Activated naive CD4-positive, alpha-beta T cell treated with anti-CD3 and anti-CD28 coated beads for 36 hours (primary cell): ENCODE measurements at regions of chr14 and their contacts with region 1.

Region 1: DNA sequence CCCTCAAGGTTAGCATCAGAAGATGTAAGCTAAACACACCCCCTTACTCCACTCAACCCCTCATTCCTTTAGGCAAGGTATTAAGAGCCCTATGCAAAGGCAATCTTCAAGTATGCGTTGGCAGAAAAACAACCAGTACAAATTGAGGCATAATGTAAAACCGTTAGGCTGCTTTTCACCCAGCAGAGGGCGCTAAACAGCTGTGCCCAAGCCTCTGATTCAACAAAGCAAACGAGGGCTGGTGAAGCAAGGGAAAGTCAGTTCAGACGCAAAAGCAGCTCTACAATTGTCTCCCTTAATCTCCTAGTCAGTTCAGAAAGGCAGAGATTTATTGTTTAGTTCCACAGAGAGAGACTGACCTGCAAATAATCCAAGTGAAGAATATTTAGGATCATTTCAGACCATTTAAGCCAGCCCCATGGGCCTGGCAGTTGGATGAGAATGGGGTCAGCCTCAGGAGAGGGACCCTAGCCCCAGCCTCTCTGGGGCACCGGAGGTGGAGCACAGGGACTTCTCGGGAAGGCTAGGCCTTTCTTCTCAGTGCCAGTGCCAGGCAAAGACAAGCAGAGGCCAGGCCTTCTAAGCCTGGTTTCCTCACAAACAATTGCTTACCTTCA is 23.5 kb downstream of the DCAF5 start:
- DNase-seq: peak; percentile 89
- H3K4me3 Mint-ChIP-seq: no peak overlapping the region
- H3K27ac Mint-ChIP-seq: peak overlapping the region; percentile 26
- H3K4me1 Mint-ChIP-seq: peaks cover 67% of the 10 kb centered on the region
- H3K27me3 Mint-ChIP-seq: no peaks in the 10 kb centered on the region

Region 2: DNA sequence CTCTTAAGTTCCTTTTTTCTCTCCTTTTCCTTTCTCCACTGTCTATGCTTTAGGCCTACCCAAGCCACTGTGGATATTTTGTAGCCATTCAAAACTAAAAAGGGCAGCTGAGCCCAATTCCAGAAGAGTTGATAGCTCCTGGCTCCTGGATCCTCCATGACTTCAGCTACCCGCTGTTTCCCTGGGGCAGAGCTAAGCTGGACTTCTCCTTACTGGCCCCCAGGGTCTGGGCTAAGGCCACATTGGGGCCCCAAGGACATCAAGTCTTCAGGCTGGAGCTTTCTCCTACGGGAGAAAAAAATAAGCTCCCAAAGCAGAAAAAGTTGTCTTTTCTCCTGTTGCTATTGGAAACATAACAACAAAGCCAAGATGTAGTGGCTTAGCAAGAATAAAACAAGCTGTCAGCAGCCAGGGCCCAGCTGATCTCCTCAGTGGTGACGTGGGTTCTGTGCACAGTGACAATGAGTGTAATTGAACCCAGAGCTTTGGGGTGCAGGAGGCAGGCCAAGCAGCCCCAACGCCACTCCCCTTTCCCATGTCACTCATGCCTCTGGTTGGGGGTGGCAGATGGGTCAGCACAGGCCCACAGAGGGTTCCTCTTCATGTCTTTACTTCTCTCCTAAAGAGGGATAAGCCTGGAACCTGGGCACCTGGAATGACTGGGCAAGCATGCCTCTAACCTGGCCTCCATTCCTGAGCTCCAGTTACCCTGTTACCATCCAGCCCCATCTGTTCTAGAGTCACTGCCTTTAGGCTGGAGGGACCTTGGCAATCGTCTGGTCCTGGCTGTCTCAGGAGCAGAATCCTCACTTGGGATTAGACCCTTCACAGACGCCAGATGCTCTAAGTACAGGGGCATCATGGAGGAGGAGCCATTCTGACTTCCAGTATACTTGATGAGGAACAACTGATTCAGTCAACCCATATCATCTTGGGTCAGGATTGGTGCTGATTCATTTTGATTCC is 507.7 kb before region 1 on chr14:
- CTCF ChIA-PET with region 1: no interaction called
- intact Hi-C with region 1: no loop called
- DNase-seq: no peak
- H3K4me3 Mint-ChIP-seq: no peak overlapping the region
- H3K27ac Mint-ChIP-seq: no peak overlapping the region
- H3K4me1 Mint-ChIP-seq: no peaks in the 10 kb centered on the region
- H3K27me3 Mint-ChIP-seq: no peaks in the 10 kb centered on the region

Region 3: DNA sequence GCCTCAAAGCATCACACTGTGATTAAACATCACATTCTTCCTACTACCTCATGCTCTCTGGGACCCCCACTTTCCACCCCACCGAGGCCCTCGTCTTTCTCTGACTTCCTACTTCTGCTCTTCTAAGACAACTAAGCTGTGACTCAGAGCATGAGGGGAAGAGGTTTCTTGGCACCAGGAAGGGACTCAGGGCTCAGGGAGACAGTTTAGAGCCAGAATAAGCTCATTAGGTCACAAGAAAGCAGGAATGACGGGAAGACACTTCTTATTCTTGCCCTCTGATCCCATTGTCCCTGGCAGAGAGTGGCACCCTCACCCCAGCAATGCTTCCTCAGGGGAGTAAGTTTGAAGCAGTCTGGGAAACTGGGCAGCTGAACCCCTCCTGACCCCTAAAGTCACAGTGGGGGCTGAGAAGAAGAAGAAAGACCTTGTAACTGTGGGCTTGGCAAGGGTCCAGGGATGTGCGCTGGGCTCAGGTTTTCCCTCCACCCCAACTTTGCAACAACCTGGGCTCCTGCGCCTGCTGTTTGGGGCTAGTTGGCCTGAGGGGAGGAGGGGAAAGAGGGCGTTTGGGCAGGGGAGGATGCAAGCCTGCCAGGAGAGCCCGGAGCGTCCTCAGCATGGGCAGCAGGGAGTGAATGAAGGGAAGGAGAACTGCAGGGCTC is 85.6 kb before region 1 on chr14:
- CTCF ChIA-PET with region 1: no interaction called
- intact Hi-C with region 1: no loop called
- DNase-seq: no peak
- H3K4me3 Mint-ChIP-seq: no peak overlapping the region
- H3K27ac Mint-ChIP-seq: no peak overlapping the region
- H3K4me1 Mint-ChIP-seq: peaks cover 8% of the 10 kb centered on the region
- H3K27me3 Mint-ChIP-seq: peaks cover 29% of the 10 kb centered on the region

Region 4: DNA sequence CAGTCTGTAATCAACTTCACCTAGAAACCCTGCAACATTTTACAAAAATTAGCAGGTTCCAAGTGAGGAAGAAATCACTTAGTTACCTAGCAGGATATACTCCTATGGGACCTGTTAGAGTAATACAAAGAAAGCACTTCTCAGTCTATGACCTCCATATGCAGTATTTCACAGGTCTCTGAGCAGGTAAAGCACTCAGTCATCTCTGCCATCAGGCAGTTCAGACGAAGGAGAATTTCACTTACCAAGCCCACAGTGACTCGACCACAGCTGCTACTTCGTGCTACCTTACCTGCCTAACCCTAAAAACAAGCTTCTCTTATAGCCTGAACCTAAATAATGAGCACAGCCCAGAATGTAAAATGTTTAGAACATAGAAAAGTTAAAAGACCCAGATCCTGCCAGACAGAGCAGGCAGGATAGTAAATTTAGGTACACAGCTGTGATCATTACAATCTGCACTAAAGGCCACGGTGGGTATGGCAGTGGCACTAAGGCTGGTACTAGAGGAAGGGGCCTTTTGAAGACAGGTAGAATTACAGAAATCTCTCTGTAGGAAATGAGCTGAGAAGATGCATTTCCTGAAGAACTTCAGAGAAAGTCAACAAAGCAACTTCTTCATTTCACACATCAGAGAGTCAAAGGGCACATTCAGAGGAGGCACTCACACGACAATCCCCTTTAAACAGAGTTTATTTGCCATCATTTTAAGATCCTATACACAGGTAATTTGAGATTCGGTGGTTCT is 12.2 kb before region 1 on chr14:
- CTCF ChIA-PET with region 1: interaction called, 10 read pairs
- intact Hi-C with region 1: no loop called
- DNase-seq: peak; percentile 33
- H3K4me3 Mint-ChIP-seq: no peak overlapping the region
- H3K27ac Mint-ChIP-seq: peak overlapping the region; percentile 57
- H3K4me1 Mint-ChIP-seq: peaks cover 37% of the 10 kb centered on the region
- H3K27me3 Mint-ChIP-seq: no peaks in the 10 kb centered on the region

Region 5: GRCh38 chr14:69153131-69153872 is 23.9 kb after region 1 on chr14:
- CTCF ChIA-PET with region 1: interaction called, 45 read pairs
- intact Hi-C with region 1: loop called (anchors 1 kb)
- DNase-seq: peak; percentile 95
- H3K4me3 Mint-ChIP-seq: peak overlapping the region; percentile 82
- H3K27ac Mint-ChIP-seq: peak overlapping the region; percentile 24
- H3K4me1 Mint-ChIP-seq: peaks cover 31% of the 10 kb centered on the region
- H3K27me3 Mint-ChIP-seq: no peaks in the 10 kb centered on the region

Region 6: GRCh38 chr14:69170839-69171238 is 41.5 kb after region 1 on chr14:
- CTCF ChIA-PET with region 1: no interaction called
- intact Hi-C with region 1: no loop called
- DNase-seq: no peak
- H3K4me3 Mint-ChIP-seq: no peak overlapping the region
- H3K27ac Mint-ChIP-seq: no peak overlapping the region
- H3K4me1 Mint-ChIP-seq: no peaks in the 10 kb centered on the region
- H3K27me3 Mint-ChIP-seq: no peaks in the 10 kb centered on the region

Region 7: GRCh38 chr14:69191340-69192111 is 62.2 kb after region 1 on chr14 and contains the start of gene EXD2:
- CTCF ChIA-PET with region 1: interaction called, 11 read pairs
- intact Hi-C with region 1: loop called (anchors 1 kb)
- DNase-seq: peak; percentile 91
- H3K4me3 Mint-ChIP-seq: peak within 1 kb of the TSS; percentile 93
- H3K27ac Mint-ChIP-seq: peak within 1 kb of the TSS; percentile 76
- H3K4me1 Mint-ChIP-seq: peaks cover 23% of the 10 kb centered on the region
- H3K27me3 Mint-ChIP-seq: no peaks in the 10 kb centered on the region
- total RNA-seq, gene EXD2: 11.8 to 12.7 TPM

Region 8: DNA sequence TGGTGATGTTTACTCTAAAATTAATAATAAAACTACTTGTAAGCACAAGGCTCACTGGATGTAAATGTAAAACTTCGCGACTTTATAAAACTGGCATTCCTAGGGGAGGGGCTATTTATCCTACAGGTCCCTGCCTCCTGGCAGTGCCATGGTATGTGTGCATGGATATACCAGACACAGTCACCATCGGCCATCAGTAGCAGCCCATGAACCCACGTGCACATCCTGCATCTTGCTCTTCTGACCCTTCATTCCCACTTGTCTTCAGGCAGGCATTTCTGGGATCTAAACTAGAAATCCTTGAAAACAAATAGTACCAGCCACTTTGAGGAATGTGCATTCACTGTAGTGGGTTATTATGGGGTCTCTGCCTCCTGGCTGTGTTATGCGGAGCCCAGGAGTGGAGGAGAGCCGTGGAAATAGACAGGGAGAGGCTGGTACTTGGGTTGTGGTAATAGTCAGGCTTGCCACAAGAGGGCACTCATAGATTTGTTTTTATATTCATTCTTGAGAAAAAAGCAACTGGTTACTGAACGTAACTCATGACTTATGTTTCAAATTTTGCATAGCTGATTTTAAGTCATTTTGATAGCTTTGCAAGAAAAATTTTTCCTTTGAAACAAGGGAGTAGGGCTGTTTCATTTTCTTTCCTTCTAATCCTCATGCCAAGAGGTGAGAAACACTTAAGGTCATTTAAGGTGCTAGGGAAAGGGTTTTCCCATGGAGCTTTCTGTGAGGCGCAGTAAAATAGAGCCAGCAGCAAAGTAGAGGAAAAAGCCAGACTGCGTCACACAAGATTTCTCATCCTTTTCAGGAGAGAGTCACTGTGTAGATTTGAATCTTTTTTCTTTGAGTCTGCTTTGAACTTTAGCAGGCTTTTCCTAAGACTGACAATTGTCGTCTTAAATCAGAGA is 113.2 kb after region 1 on chr14:
- CTCF ChIA-PET with region 1: interaction called, 7 read pairs
- intact Hi-C with region 1: loop called (anchors 1 kb)
- DNase-seq: peak; percentile 77
- H3K4me3 Mint-ChIP-seq: no peak overlapping the region
- H3K27ac Mint-ChIP-seq: no peak overlapping the region
- H3K4me1 Mint-ChIP-seq: peaks cover 2% of the 10 kb centered on the region
- H3K27me3 Mint-ChIP-seq: no peaks in the 10 kb centered on the region

Region 9: DNA sequence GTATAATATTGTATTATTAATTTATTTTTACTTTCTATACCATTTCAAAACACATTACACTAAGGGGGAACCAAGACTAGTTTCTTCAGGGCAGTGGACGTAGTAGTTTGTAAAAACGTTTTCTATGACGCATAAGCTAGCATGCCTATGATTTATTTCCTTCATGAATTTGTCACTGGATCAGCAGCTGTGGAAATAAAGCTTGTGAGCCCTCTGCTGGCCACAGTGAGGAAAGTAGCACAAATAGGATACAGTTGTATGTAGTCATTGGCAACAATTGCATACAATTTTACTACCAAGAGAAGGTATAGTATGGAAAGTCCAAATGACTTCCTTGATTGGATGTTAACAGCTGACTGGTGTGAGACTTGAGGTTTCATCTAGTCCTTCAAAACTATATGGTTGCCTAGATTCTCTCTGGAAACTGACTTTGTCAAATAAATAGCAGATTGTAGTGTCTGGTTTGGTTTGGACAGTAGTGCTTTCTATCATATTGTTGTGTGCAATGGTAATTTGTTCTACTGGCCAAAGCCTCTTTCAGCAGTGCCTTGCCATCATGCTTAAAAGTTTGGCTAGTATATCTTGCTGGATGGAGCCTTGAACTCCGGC is 330.8 kb after region 1 on chr14:
- CTCF ChIA-PET with region 1: interaction called, 10 read pairs
- intact Hi-C with region 1: loop called (anchors 1 kb)
- DNase-seq: peak; percentile 80
- H3K4me3 Mint-ChIP-seq: no peak overlapping the region
- H3K27ac Mint-ChIP-seq: no peak overlapping the region
- H3K4me1 Mint-ChIP-seq: no peaks in the 10 kb centered on the region
- H3K27me3 Mint-ChIP-seq: no peaks in the 10 kb centered on the region

Region 10: GRCh38 chr14:69574263-69574953 is 445.0 kb after region 1 on chr14 and contains the start of gene CCDC177:
- CTCF ChIA-PET with region 1: no interaction called
- intact Hi-C with region 1: loop called (anchors 10 kb)
- DNase-seq: peak; percentile 81
- H3K4me3 Mint-ChIP-seq: peak within 1 kb of the TSS; percentile 68
- H3K27ac Mint-ChIP-seq: no peak within 1 kb of the TSS
- H3K4me1 Mint-ChIP-seq: peaks cover 10% of the 10 kb centered on the region
- H3K27me3 Mint-ChIP-seq: peaks cover 43% of the 10 kb centered on the region
- total RNA-seq, gene CCDC177: not detected